Activated CD4-positive, alpha-beta T cell treated with anti-CD3 and anti-CD28 coated beads, Interleukin-2, amount 10 ng/mL, durations not matched to agents 7 days and 5 days (primary cell): ENCODE measurements at regions of chr1 and their contacts with region 1.

Region 1: DNA sequence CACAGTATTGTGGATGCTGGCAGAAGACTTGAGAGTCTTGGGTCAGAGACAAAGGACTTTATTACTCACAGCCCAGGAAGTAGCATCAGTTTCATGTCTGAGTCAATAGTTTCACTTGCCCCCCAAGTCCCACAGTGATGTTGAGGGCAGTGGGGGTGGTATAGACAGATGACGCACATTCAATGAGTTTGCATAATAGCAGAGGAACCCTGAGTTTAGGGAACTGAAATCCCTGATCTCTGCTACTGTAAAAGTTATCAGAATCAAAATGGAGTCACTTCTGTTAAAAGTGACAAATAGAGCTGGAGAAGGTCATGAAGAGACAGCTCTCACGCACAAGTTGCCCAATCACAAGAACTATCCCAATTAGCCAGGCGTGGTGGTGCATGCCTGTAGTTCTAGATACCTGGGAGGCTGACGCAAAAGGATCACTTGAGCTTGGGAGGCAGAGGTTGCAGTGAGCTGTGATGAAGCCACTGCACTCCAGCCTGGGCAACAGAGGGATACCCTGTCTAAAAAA is 11.5 kb upstream of the HCRTR1 start:
- DNase-seq: no peak
- H3K4me3 Mint-ChIP-seq: no peak overlapping the region
- H3K27ac Mint-ChIP-seq: no peak overlapping the region
- H3K4me1 Mint-ChIP-seq: peaks cover 2% of the 10 kb centered on the region
- H3K27me3 Mint-ChIP-seq: peaks cover 18% of the 10 kb centered on the region

Region 2: DNA sequence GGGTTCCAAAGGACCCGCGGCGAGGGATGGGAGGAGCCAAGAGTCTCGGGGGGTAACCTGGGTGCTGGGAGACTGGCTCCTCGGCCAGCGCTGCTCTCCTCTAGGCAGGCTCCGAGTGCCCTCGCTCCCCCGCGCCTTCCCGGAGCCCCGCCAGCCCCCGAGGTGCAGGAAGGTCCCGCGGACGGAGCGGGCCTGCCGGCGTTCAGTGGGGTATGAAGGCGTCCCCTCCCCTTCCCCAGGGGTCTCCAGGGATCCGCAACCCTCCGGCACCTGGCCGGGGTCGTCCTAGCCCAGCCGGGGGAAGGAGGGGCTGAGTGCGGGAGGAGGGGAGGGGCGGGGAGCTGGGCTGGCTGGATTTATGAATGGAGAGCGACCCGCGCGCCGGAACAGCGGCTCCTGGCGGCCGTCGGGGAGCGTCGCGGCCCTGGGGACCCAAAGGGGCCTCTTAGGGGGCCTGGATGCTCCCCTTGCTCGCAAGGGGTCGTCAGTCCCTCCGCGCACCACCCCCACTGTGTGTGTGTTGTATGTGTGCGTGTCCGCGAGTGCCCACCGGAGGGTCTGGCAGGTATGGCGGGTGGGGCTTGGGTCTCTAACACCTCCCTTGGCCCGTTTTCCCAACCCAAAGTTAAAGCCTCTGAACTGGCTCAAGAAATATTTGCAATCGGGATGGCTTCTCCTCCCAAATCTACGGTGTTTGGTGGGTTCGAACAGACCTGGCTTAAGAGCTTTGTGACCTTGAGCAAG is 12.1 kb after region 1 on chr1:
- CTCF ChIA-PET with region 1: interaction called, 13 read pairs
- POLR2A ChIA-PET with region 1: no interaction called
- DNase-seq: peak; percentile 32
- H3K4me3 Mint-ChIP-seq: no peak overlapping the region
- H3K27ac Mint-ChIP-seq: no peak overlapping the region
- H3K4me1 Mint-ChIP-seq: peaks cover 2% of the 10 kb centered on the region
- H3K27me3 Mint-ChIP-seq: peaks cover 26% of the 10 kb centered on the region